Mammary epithelial cell (primary cell): ENCODE measurements at regions of chr1 and their contacts with region 1.

Region 1: GRCh38 chr1:31938174-31938950 is at the start of gene PTP4A2:
- DNase-seq: peak; percentile 95
- H3K4me3 ChIP-seq: peak within 1 kb of the TSS; percentile 73 to 98 (median 86)
- H3K27ac ChIP-seq: peak within 1 kb of the TSS; percentile 86
- H3K4me1 ChIP-seq: peaks cover 47% of the 10 kb centered on the region
- H3K27me3 ChIP-seq: no peaks in the 10 kb centered on the region
- CTCF ChIP-seq: peak; percentile 37 to 39
- total RNA-seq, gene PTP4A2: 185 to 216 TPM

Region 2: DNA sequence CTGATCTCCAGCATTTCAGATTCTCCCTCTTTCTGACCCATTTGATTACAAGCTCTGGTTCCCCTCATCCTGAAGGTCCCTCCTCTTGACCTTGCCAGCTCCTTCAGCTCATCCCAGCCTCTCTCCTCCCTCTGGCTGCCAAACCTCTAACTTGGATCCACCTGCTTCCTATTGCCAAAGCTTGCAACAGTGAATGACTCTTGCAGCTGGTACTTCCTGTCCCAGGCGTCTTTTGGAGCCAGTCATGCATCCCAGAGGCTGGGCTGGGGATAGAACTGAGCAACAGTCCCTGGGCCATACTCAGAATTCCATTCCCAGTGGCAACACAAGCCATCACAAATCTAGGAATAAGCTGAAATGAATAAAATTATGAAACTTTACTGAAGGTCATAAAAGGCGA is 94.9 kb before region 1 on chr1:
- CTCF ChIA-PET with region 1: no interaction called
- dilution Hi-C with region 1: no loop called
- in situ Hi-C with region 1: no loop called
- intact Hi-C with region 1: loop called (anchors 5 kb)
- DNase-seq: peak; percentile 41
- H3K4me3 ChIP-seq: no peak overlapping the region
- H3K27ac ChIP-seq: no peak overlapping the region
- H3K4me1 ChIP-seq: peaks cover 4% of the 10 kb centered on the region
- H3K27me3 ChIP-seq: no peaks in the 10 kb centered on the region
- CTCF ChIP-seq: no peak

Region 3: GRCh38 chr1:32013386-32014198 is 75.2 kb after region 1 on chr1 and contains the start of gene KHDRBS1:
- CTCF ChIA-PET with region 1: no interaction called
- dilution Hi-C with region 1: no loop called
- in situ Hi-C with region 1: no loop called
- intact Hi-C with region 1: loop called (anchors 5 kb)
- DNase-seq: peak; percentile 97
- H3K4me3 ChIP-seq: peak within 1 kb of the TSS; percentile 74 to 96 (median 84)
- H3K27ac ChIP-seq: peak within 1 kb of the TSS; percentile 87
- H3K4me1 ChIP-seq: peaks cover 17% of the 10 kb centered on the region
- H3K27me3 ChIP-seq: no peaks in the 10 kb centered on the region
- CTCF ChIP-seq: no peak
- total RNA-seq, gene KHDRBS1: 39.8 to 109 TPM

Region 4: DNA sequence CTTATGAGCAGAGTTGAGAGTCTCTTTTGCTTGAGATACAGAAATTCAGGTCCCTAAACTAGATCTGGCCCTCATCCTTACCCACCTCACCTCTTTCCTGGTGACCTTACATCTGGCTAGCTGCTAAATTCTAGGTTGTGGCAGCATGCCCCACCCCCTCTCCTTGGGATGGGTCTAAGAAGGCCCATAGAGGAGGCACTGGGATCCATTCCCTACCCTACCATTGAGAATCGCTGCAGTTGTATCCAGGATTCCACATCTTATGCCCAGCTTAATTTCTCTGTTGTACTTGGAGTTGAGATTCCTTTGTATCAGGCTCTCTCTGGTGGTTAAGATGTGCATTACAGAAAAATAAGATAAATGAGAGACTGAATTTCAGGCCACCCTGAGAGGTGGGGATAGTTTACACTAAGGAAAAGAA is 124.9 kb after region 1 on chr1:
- CTCF ChIA-PET with region 1: no interaction called
- dilution Hi-C with region 1: no loop called
- in situ Hi-C with region 1: no loop called
- intact Hi-C with region 1: loop called (anchors 1 kb)
- DNase-seq: peak; percentile 38
- H3K4me3 ChIP-seq: no peak overlapping the region
- H3K27ac ChIP-seq: no peak overlapping the region
- H3K4me1 ChIP-seq: peaks cover 23% of the 10 kb centered on the region
- H3K27me3 ChIP-seq: no peaks in the 10 kb centered on the region
- CTCF ChIP-seq: peak; percentile 54 to 59

Region 5: GRCh38 chr1:32091176-32091575 is 152.8 kb after region 1 on chr1:
- CTCF ChIA-PET with region 1: no interaction called
- dilution Hi-C with region 1: no loop called
- in situ Hi-C with region 1: no loop called
- intact Hi-C with region 1: no loop called
- DNase-seq: no peak
- H3K4me3 ChIP-seq: no peak overlapping the region
- H3K27ac ChIP-seq: no peak overlapping the region
- H3K4me1 ChIP-seq: no peaks in the 10 kb centered on the region
- H3K27me3 ChIP-seq: no peaks in the 10 kb centered on the region
- CTCF ChIP-seq: no peak